Posterior vena cava (tissue), 2 donors: ENCODE measurements at regions of chr12 and their contacts with region 1.

Region 1: GRCh38 chr12:79935021-79935623 is at the start of gene PPP1R12A:
- DNase-seq: peak; percentile 99
- total RNA-seq, gene PPP1R12A: 220 to 239 TPM

Region 2: DNA sequence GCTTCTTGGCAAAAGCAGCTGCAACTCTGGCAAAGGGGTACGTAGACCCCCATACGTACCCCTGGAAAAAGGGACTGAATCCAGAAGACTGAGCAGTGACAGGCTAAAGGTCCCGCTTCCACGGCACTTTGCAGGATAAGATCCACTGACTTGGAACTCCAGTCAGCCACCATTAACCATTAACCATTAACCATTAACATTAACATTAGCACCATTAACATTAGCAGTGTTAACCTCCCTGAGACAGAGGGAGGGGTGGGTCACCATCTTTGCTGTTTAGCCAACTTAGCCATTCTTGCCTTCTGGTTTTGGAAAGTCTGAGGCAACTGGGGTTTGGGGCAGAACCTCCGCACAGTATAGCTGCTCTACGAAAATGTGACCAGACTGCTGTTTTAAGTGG is 431.8 kb before region 1 on chr12:
- intact Hi-C with region 1: no loop called
- DNase-seq: no peak

Region 3: GRCh38 chr12:79690638-79691493 is 244.3 kb before region 1 on chr12 and contains the start of gene PAWR:
- intact Hi-C with region 1: loop called in 1 of 2 experiments (anchors 10 kb)
- DNase-seq: peak; percentile 86
- total RNA-seq, gene PAWR: 148 to 218 TPM

Region 4: DNA sequence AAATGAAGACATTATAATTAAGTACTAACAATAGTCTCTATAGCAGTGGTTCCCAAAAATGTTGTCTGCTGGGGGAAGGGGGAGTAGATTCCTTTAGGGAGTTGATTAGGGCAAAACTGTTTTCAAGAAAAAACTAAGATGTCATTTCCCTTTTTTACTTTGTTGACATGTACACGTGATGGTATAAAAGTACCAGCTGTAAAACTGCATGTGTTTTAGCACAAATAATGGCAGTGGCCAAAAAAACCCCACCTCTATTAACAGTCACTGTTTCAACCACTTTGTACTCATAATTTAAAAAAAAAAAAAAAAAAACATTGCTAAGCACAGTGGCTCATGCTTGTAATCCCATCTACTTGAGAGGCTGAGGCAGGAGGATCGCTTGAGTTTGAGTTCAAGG is 61.9 kb before region 1 on chr12:
- intact Hi-C with region 1: no loop called
- DNase-seq: no peak

Region 5: GRCh38 chr12:79886917-79887519 is 48.1 kb before region 1 on chr12:
- intact Hi-C with region 1: no loop called
- DNase-seq: no peak

Region 6: DNA sequence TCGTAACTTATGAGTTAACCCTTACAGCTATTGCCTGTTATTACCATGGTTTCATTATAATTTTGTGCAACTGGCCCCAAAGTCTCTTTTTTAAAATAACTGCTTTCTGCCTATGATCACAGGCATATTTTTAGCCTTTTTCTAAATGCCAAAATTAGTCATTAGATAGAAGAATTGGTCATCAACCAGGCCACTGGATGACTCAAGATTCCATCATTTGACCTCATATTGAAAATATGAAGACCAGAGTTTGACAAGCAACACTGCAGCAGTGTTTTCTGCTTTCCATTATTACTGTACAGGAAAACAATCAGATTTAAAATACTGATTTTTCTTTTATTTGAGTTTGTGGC is 109.5 kb after region 1 on chr12:
- intact Hi-C with region 1: loop called in 1 of 2 experiments (anchors 5 kb)
- DNase-seq: no peak

Region 7: GRCh38 chr12:80186727-80187217 is 251.7 kb after region 1 on chr12:
- intact Hi-C with region 1: loop called in 1 of 2 experiments (anchors 5 kb)
- DNase-seq: no peak

Region 8: DNA sequence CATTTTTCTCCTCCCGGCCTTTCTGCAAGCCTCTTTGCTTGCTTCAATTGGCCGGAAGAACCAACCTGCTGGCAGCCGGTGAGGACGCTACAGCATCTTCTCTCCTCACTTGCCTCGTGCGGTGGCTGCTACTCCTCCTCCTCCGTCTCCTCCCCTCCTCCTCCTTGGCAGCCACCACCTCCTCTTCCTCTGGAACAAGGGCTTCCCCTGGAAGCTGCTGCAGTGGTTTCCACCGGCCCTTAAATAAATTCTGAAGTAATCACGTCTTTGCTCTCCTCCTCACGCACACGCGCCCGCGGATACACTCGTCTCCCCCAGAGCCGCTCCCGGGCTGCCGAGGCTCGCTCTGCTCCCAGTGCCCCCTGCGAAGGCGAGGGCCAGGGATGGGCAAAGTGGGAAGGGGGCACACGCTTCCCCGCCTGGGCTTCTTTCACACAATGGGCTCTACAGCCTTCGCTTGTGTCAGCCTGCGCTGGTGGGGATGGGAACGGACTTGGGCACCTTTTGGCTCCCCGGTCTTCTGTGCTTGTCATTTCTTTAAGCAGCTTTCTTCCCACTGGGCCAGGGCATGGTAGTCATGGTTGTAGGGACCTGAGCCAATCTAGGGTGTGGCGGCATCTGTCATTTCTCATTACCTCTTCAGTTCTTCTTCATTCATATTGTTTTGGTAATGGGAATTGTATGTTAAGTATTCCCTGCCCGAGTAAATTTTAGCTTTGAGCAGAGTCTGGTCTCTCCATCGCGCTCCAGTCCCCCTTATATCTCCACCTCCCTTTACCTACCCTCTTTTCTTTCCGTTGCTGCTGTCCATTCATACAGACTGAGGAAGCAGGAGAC is 1824.3 kb after region 1 on chr12 and contains the start of gene PPFIA2:
- intact Hi-C with region 1: no loop called
- DNase-seq: peak; percentile 78
- total RNA-seq, gene PPFIA2: 22.6 to 62.6 TPM